Head of caudate nucleus (tissue), 42 donors: ENCODE measurements at regions of chr5 and their contacts with region 1.

Region 1: DNA sequence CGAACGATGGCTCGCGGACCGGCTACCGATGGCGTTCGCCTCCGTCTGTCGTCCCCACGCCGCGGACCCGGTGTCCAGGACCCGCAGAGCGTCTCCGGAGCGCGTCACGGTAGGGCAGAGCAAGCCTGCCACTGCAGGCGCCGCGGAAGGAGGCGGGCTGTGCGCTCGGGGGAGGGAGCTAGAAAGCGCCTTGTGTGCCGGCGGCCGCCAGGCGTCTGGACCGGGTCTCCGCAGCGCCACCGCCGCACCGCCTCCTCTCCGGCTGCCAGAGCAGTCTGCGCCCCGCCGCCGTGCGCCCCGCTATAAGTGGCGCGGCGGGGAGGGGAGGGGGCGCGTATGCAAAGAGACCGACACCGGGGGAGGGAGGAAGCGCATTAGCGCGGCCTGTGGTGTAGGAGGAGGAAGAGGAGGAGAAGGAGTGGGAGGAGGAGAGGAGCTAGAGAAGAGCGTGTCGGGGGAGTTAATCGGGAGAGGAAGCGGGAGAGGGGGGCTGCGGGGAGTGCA is at the start of gene ENC1:
- DNase-seq: peak; percentile 53 to 93 (median 83)

Region 2: GRCh38 chr5:73901455-73901854 is 739.0 kb before region 1 on chr5:
- intact Hi-C with region 1: loop called (anchors 2 kb)
- DNase-seq: peak in 1 of 42 donors; percentile 8

Region 3: DNA sequence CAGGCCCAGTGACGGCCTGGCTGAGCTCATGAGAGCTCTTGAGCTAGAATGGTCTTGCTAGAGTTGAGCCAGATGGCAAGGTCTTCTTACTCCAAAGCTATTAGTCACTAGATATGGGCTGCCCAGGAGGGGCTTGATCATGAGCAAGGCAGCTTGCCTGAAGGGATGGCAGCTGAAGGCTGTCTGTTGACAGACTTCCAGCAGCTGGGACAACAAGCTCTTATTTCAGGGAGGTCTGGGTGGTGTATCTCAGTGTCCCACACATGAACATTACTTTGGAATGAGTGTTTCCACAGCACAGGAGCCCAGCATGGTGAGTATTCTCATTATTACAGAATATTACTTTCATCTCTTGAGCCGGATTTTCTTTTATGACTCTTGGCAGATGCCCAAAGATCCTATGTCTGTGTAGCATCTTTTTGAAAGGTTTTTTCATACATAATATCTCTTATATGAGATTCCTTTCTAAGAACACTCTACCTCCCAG is 600.4 kb before region 1 on chr5:
- intact Hi-C with region 1: no loop called
- DNase-seq: no peak